ENCODE measurements at regions of chr1 and their contacts with region 1.

Region 1: GRCh38 chr1:26284597-26285360 is 4.9 kb downstream of the SH3BGRL3 start:
- DNase-seq: peak; percentile 44
- ATAC-seq: peak; percentile 79
- H3K4me3 ChIP-seq: no peak overlapping the region
- H3K27ac ChIP-seq: no peak overlapping the region
- H3K4me1 ChIP-seq: peaks cover 12% of the 10 kb centered on the region
- H3K27me3 ChIP-seq: no peaks in the 10 kb centered on the region
- CTCF ChIP-seq: peak; percentile 84
- EP300 ChIP-seq: no peak
- POLR2A ChIP-seq: no peak
- RAD21 ChIP-seq: peak; percentile 94

Region 2: GRCh38 chr1:26083246-26083645 is 201.5 kb before region 1 on chr1:
- CTCF ChIA-PET with region 1: no interaction called
- POLR2A ChIA-PET with region 1: no interaction called
- in situ Hi-C with region 1: no loop called
- intact Hi-C with region 1: no loop called
- DNase-seq: no peak
- ATAC-seq: no peak
- H3K4me3 ChIP-seq: no peak overlapping the region
- H3K27ac ChIP-seq: no peak overlapping the region
- H3K4me1 ChIP-seq: no peaks in the 10 kb centered on the region
- H3K27me3 ChIP-seq: no peaks in the 10 kb centered on the region; a peak in 2 of 5 replicates
- CTCF ChIP-seq: no peak
- EP300 ChIP-seq: no peak
- POLR2A ChIP-seq: no peak
- RAD21 ChIP-seq: no peak

Region 3: GRCh38 chr1:26145041-26145959 is 139.5 kb before region 1 on chr1:
- CTCF ChIA-PET with region 1: no interaction called
- POLR2A ChIA-PET with region 1: no interaction called
- in situ Hi-C with region 1: no loop called
- intact Hi-C with region 1: no loop called
- DNase-seq: peak; percentile 80
- ATAC-seq: peak; percentile 94
- H3K4me3 ChIP-seq: no peak overlapping the region
- H3K27ac ChIP-seq: no peak overlapping the region
- H3K4me1 ChIP-seq: peaks cover 9% of the 10 kb centered on the region; the same call in 1 of the 2 replicates
- H3K27me3 ChIP-seq: peaks cover 0 to 7% of the 10 kb centered on the region in 2 experiments; a peak in 4 of 5 replicates
- CTCF ChIP-seq: peak; percentile 87
- EP300 ChIP-seq: no peak
- POLR2A ChIP-seq: no peak
- RAD21 ChIP-seq: peak; percentile 83

Region 4: GRCh38 chr1:26321315-26322041 is 36.7 kb after region 1 on chr1:
- CTCF ChIA-PET with region 1: interaction called, 22 read pairs
- POLR2A ChIA-PET with region 1: no interaction called
- in situ Hi-C with region 1: loop called (anchors 5 kb)
- intact Hi-C with region 1: loop called (anchors 1 kb)
- DNase-seq: peak; percentile 69
- ATAC-seq: peak; percentile 92
- H3K4me3 ChIP-seq: no peak overlapping the region; a peak in 1 of 6 replicates
- H3K27ac ChIP-seq: no peak overlapping the region
- H3K4me1 ChIP-seq: no peaks in the 10 kb centered on the region
- H3K27me3 ChIP-seq: no peaks in the 10 kb centered on the region
- CTCF ChIP-seq: peak; percentile 96
- EP300 ChIP-seq: no peak
- POLR2A ChIP-seq: no peak
- RAD21 ChIP-seq: peak; percentile 94

Region 5: DNA sequence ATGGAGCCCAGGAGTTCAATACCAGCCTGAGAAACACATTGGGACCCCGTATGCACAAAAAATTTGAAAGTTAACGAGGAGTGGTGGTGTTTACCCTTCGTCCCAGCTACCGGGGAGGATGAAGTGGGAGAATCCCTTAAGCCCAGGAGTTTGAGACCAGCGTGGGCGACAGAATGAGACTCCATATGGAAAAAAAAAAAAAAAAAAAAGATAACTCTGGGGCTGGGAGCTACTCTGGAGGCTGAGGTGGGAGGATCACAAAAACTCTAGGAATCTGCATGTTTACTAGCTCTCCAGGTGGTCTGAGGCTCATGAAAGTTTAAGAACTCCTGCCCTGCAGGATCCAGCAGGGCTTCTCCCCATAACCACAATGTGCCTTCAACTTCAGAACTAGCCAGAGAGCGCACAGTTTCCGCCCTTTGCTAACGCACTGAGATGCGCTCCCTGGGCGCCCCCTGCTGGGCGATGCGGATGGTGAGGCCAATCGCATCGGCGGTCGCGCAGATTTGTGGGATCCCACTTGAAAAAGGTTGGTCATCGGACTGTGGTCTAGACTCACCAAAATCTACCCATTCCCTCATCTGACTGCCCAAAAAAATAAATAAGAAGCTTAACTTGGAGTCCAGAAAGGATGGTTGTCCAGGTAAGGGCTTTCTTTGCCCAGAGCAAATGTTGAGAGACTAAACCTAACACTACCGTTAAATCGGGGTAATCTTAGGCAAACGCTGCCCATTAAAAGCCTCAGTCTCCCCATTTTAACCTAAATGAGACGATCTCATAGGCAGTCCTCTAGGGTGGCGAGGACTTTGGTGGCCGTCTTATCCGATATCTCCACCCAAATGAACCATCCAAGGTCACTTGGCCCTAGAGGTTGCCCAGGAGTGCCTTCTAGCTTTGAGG is 79.0 kb after region 1 on chr1:
- CTCF ChIA-PET with region 1: interaction called, 51 read pairs
- POLR2A ChIA-PET with region 1: interaction called, 13 read pairs
- in situ Hi-C with region 1: loop called (anchors 5 kb)
- intact Hi-C with region 1: loop called (anchors 1 kb)
- DNase-seq: peak; percentile 71
- ATAC-seq: peak; percentile 77
- H3K4me3 ChIP-seq: 0 out of 6 replicates have a peak overlapping the region, but pooled peaks of 1 of the 3 experiments have one; percentile 18
- H3K27ac ChIP-seq: no peak overlapping the region
- H3K4me1 ChIP-seq: peaks cover 57% of the 10 kb centered on the region
- H3K27me3 ChIP-seq: peaks cover 0 to 1% of the 10 kb centered on the region in 2 experiments; a peak in 2 of 5 replicates
- CTCF ChIP-seq: peak; percentile 95
- EP300 ChIP-seq: no peak
- POLR2A ChIP-seq: no peak
- RAD21 ChIP-seq: peak; percentile 96

Region 6: DNA sequence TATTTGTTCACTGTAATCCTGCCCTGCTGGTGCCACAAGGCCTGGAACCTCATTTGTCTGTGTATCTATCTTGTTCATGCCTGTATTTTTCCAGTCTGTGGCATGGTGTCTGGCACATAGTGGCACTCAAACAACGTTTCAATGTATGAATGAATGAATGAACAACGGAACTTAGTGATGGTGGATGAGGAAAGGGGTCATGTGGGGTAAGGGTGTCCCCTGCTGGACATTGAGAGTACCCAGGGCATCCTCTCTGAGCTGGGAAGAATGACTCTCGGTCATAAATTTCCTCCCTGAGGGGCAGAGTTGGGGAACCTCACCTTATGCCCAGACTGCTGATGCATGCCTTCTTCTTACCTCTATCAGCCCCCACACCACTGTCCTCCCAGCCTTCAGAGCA is 106.7 kb after region 1 on chr1:
- CTCF ChIA-PET with region 1: interaction called, 22 read pairs
- POLR2A ChIA-PET with region 1: no interaction called
- in situ Hi-C with region 1: loop called (anchors 5 kb)
- intact Hi-C with region 1: loop called (anchors 1 kb)
- DNase-seq: peak; percentile 52
- ATAC-seq: peak; percentile 67
- H3K4me3 ChIP-seq: no peak overlapping the region
- H3K27ac ChIP-seq: no peak overlapping the region
- H3K4me1 ChIP-seq: peaks cover 55% of the 10 kb centered on the region
- H3K27me3 ChIP-seq: no peaks in the 10 kb centered on the region; a peak in 2 of 5 replicates
- CTCF ChIP-seq: peak; percentile 81
- EP300 ChIP-seq: no peak
- POLR2A ChIP-seq: no peak
- RAD21 ChIP-seq: peak; percentile 87

Region 7: DNA sequence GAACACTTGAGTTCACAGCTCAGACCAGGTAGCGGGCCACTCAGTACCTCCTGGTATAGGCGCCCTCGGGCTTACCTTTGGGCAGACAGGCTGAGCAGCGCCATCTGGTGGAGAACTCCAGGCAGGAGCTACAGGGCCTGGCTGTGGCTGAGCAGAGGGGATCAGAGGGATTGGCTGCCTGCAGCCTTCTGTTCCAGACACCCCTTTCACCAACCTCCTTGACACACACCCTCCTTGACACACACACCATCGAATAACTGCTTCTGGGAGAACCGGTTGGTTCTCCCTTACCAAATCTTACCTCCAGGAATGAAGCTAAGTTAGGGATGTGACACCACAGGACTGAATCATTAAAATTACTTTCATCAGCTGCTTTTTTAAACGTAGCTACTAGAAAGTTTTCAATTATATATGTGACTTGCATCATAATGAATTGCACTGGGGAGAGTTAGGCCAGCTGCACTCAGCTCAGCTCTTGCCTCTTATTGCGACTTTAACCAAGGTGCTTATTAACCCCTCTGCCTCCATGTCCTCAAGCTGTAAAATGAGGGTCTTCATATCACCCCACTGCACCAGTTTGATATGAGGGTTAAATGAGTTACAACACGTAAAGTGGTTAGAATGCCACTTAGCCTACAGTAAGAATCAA is 132.5 kb after region 1 on chr1:
- CTCF ChIA-PET with region 1: interaction called, 22 read pairs
- POLR2A ChIA-PET with region 1: no interaction called
- in situ Hi-C with region 1: no loop called
- intact Hi-C with region 1: loop called (anchors 1 kb)
- DNase-seq: peak; percentile 63
- ATAC-seq: peak; percentile 100
- H3K4me3 ChIP-seq: no peak overlapping the region
- H3K27ac ChIP-seq: no peak overlapping the region
- H3K4me1 ChIP-seq: no peaks in the 10 kb centered on the region
- H3K27me3 ChIP-seq: peaks cover 1 to 20% of the 10 kb centered on the region in 2 experiments; a peak in 2 of 5 replicates
- CTCF ChIP-seq: peak; percentile 91
- EP300 ChIP-seq: no peak
- POLR2A ChIP-seq: no peak
- RAD21 ChIP-seq: peak; percentile 69

Measured in HepG2 (cell line).